IMR-90 (cell line): ENCODE measurements at regions of chr3 and their contacts with region 1.

Region 1: DNA sequence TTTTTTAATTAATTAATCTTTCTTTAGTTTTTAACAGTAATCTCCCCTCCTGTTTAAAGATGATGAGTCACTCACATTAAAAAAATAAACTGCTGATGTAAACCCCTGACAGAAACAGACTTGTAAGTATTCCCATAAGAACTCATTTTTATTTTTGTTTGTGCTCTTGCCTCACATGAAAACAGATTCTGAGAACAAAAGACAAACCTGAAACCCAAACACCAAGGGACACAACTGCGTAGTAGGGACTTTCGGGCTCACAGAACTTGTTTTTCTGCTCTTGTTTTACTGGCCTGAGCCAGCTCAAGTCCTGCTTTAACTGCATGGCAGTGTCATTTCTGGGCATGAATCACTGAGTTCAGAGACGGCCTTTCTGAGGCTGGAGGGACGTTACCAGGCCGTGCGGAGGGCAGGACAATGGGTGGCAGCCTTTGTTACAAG is 600.8 kb downstream of the FOXP1 start:
- DNase-seq: peak; percentile 86
- ATAC-seq: peak; percentile 70
- H3K4me3 ChIP-seq: no peak overlapping the region
- H3K27ac ChIP-seq: peak overlapping the region; percentile 72
- H3K4me1 ChIP-seq: peaks cover 35% of the 10 kb centered on the region
- H3K27me3 ChIP-seq: no peaks in the 10 kb centered on the region
- CTCF ChIP-seq: no peak
- POLR2A ChIP-seq: no peak
- RAD21 ChIP-seq: no peak

Region 2: DNA sequence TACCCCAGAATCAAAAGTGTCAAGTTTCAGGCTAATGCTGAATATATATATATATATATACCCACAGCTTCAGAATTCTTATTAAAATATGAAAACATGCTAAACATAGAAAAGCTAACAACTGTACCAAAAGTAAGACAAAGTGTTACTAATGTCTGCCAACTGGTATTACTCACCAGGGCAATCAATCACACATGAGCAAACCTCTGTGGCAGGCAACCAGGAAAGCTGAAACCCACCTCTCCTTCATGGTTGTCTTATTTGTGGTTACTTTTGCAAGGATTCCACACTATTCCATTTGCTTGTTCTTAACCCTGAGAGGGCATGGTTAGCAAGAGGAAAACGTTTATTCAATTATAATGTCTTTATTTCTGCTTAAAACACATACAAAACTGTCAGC is 157.9 kb before region 1 on chr3:
- CTCF ChIA-PET with region 1: no interaction called
- POLR2A ChIA-PET with region 1: no interaction called
- dilution Hi-C with region 1: no loop called
- in situ Hi-C with region 1: no loop called
- intact Hi-C with region 1: no loop called
- DNase-seq: peak; percentile 79
- ATAC-seq: peak; percentile 27
- H3K4me3 ChIP-seq: no peak overlapping the region
- H3K27ac ChIP-seq: no peak overlapping the region
- H3K4me1 ChIP-seq: peaks cover 7% of the 10 kb centered on the region
- H3K27me3 ChIP-seq: no peaks in the 10 kb centered on the region
- CTCF ChIP-seq: no peak
- POLR2A ChIP-seq: no peak
- RAD21 ChIP-seq: no peak

Region 3: DNA sequence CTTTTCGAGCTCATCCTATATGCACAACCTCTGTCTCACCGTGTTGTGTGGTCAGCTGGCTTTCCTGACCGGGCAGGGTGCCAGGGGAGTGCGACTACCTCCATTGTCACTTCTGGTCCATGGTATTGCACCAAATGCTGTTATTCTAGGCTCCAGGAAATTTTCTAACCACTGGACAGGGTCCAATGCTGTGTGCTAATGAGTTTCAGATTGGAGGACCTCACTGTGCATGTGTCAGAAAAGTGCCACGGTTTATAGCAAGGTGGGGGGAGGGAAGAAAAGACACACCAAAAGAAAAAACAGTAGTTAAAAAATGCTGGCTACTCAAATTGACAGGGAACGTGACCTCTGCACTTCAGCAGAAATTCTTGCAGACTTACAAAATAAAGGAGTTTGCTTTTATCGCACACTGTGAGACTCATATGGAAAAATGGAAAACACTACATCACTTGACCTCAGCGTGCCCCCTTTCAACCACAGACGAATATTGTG is 120.8 kb after region 1 on chr3:
- CTCF ChIA-PET with region 1: no interaction called
- POLR2A ChIA-PET with region 1: no interaction called
- dilution Hi-C with region 1: no loop called
- in situ Hi-C with region 1: no loop called
- intact Hi-C with region 1: loop called (anchors 10 kb)
- DNase-seq: peak; percentile 62
- ATAC-seq: no peak
- H3K4me3 ChIP-seq: no peak overlapping the region
- H3K27ac ChIP-seq: peak overlapping the region; percentile 75
- H3K4me1 ChIP-seq: peaks cover 34% of the 10 kb centered on the region
- H3K27me3 ChIP-seq: no peaks in the 10 kb centered on the region
- CTCF ChIP-seq: no peak
- POLR2A ChIP-seq: no peak
- RAD21 ChIP-seq: no peak

Region 4: DNA sequence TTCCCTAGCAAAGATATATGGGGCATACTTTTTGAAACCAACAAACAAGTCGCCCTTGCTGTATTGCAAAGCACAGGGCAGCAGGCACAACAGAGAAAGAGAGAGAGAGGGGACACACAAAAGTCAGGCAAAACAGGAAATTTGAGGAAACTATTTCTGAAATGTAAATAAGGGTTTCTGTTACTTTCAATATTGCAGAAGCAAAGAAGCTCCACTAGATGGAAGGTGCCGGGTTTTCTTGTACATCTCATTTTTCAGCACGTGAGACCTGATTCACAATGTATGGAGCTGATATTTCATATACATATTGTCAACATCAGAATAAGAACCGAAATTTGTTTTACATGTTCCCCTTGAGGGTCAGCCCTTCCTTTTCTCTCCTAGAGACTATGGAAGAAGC is 473.4 kb after region 1 on chr3:
- CTCF ChIA-PET with region 1: no interaction called
- POLR2A ChIA-PET with region 1: no interaction called
- dilution Hi-C with region 1: no loop called
- in situ Hi-C with region 1: no loop called
- intact Hi-C with region 1: loop called (anchors 10 kb)
- DNase-seq: peak; percentile 31
- ATAC-seq: peak; percentile 79
- H3K4me3 ChIP-seq: peak overlapping the region; percentile 6; the same call in 1 of the 2 replicates
- H3K27ac ChIP-seq: peak overlapping the region; percentile 60; the same call in 1 of the 2 replicates
- H3K4me1 ChIP-seq: peaks cover 3% of the 10 kb centered on the region
- H3K27me3 ChIP-seq: no peaks in the 10 kb centered on the region
- CTCF ChIP-seq: no peak; the same call in 1 of the 2 replicates
- POLR2A ChIP-seq: no peak
- RAD21 ChIP-seq: peak; percentile 31